Activated naive CD8-positive, alpha-beta T cell treated with anti-CD3 and anti-CD28 coated beads, Interleukin-2, amount 10 ng/mL, durations not matched to agents 7 days and 5 days (primary cell): ENCODE measurements at regions of chr10 and their contacts with region 1.

Region 1: DNA sequence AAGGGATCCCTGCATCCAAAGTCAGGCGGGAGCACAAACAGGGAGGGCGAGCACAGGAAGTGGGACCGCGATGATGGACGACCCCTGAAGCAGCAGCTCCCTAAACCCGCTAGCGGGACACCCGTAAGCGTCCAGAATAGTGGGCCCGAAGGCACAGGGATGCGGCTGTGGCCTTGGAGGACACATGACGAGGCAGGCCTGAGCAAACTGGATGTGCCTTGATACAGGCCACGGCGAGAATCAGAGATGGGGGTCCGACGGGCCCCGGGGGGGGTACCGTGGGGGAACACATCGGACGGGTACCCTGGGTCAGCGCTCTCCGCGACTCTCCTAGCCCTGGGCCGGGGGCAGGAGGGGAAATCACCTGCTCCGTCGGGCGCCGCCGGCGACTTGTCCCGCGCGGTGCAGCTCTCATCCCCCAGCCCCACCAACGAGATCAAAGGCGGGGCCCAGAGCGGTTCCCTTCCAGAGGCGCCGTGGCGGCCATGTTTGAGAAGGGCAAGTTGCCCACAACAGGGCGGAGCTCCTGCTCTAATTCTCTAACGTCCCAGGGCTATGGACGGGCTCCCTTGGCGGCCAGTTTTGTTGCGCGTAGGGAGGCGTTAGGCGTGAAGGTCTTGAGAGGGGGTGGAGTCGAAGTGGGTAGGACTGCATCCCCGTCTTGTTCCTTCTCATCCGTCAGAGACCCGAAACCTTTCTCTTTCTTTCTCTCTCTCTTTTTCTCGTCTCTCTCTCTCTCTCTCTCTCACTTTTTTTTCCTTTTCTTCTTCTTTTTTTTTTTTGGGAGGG is at the start of gene CUEDC2:
- DNase-seq: peak; percentile 98
- ATAC-seq: peak; percentile 92
- H3K4me3 Mint-ChIP-seq: peak within 1 kb of the TSS; percentile 87
- H3K27ac Mint-ChIP-seq: peak within 1 kb of the TSS; percentile 94
- H3K4me1 Mint-ChIP-seq: peaks cover 36% of the 10 kb centered on the region
- H3K27me3 Mint-ChIP-seq: no peaks in the 10 kb centered on the region
- total RNA-seq, gene CUEDC2: 68.6 to 70.3 TPM

Region 2: DNA sequence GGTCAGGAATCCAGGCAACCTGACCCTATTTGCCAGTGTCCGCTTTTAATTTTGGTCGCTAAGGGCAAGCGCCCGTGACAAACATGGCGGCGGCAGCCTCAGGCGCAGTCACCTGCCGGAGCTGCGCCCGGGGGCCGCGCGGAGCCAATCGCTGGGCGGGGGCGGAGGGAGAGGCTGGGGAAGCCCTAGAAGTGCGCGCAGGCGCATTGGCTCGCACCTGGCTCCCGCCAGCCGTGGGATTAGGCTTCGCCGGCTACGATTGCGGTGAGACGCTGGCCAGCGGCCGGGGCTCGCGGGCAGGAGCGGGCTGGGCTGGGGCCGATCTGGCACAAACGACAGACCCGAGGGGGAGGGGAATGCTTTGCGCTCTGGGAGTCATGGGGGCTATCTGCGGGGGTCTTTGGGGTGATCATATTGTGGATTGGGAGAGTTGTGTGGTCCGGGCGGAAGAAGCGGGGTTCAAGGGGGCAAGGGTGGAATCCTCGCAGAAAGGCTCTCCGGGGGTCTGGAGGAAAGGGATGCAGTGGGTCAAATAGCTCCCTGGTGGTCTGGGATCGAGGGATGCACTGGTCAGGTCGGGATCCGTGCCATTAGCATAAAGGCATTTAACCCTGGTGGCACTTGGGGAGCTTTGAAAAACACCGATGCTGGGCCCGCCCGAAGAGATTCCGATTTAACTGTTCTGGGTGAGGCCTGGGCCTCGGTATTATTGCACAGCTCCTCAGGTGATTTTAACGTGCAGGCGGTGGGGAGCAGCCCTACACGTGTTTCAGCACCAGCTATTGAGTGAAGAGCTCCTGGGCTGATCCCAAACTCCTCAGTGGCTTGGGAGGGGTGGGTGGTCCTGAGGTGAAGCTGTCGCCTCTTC is 29.1 kb after region 1 on chr10:
- POLR2A ChIA-PET with region 1: interaction called, 18 read pairs
- DNase-seq: peak; percentile 94
- ATAC-seq: peak; percentile 98
- H3K4me3 Mint-ChIP-seq: peak overlapping the region; percentile 96
- H3K27ac Mint-ChIP-seq: peak overlapping the region; percentile 84
- H3K4me1 Mint-ChIP-seq: peaks cover 25% of the 10 kb centered on the region
- H3K27me3 Mint-ChIP-seq: no peaks in the 10 kb centered on the region